Motor neuron (in vitro differentiated cells): ENCODE measurements at regions of chr7 and their contacts with region 1.

Region 1: GRCh38 chr7:15305002-15305600 is 256.7 kb downstream of the AGMO start:
- ATAC-seq: peak in 1 of 8 experiments; percentile 19
- H3K4me3 ChIP-seq: no peak overlapping the region
- H3K27ac ChIP-seq: no peak overlapping the region
- H3K4me1 ChIP-seq: no peaks in the 10 kb centered on the region

Region 2: GRCh38 chr7:15561835-15562234 is 256.7 kb after region 1 on chr7 and contains the start of gene AGMO:
- in situ Hi-C with region 1: loop called in 1 of 9 experiments (anchors 25 kb)
- ATAC-seq: peak in 4 of 8 experiments; percentile 7 to 41 (median 28)
- H3K4me3 ChIP-seq: no peak within 1 kb of the TSS
- H3K27ac ChIP-seq: no peak within 1 kb of the TSS
- H3K4me1 ChIP-seq: peaks cover 0 to 3% of the 10 kb centered on the region in 2 donors
- total RNA-seq, gene AGMO: 0.13 to 8.9 (median 0.50) TPM in 6 of 8 experiments, not detected in the others

Region 3: GRCh38 chr7:15720849-15721471 is 415.9 kb after region 1 on chr7:
- in situ Hi-C with region 1: loop called in 3 of 9 experiments (anchors 25 kb)
- ATAC-seq: no peak
- H3K4me3 ChIP-seq: no peak overlapping the region
- H3K27ac ChIP-seq: no peak overlapping the region
- H3K4me1 ChIP-seq: peaks cover 0 to 6% of the 10 kb centered on the region in 2 donors

Region 4: DNA sequence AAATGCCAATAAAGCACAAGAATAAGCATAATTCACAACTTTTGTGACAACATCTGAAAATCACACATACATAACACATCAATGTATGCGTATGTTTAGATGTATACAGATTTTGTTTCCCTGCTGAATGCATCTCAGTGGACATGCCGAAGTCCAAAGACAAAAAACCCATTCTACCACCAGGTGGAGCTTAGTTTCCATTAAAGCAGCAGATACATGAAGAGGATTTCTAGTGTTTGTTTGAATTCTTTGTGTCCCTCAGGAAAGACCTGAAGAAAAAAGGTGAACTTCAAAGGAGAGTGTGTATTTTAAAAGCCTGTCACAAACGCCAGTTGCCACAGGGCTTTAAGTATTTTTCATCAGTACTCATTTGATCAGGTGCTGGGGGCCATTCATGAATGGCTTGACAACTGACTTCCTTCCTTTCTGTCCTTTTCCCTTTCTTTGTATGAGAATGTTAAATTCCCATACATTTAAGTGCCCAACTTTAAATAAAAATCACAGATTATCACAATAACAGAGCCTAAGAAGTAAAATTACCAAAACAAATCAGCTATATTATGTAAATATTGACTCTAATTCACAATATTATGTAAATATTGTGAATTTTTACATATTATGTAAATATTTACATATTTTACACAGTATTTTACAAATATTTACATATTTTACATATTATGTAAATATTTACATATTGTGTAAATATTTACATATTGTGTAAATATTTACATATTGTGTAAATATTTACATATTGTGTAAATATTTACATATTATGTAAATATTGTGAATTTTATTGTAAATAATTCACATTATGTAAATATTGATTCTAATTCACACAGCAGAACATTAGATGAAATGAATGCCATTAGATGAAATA is 773.2 kb after region 1 on chr7:
- in situ Hi-C with region 1: loop called in 2 of 9 experiments (anchors 25 kb)
- ATAC-seq: peak in 7 of 8 experiments; percentile 50 to 71 (median 57)
- H3K4me3 ChIP-seq: no peak overlapping the region
- H3K27ac ChIP-seq: no peak overlapping the region
- H3K4me1 ChIP-seq: peaks cover 0 to 2% of the 10 kb centered on the region in 2 donors